Right cardiac atrium (tissue), 5 donors: ENCODE measurements at regions of chr6 and their contacts with region 1.

Region 1: GRCh38 chr6:83086751-83087150 is 19.3 kb downstream of the DOP1A start:
- DNase-seq: no peak
- ATAC-seq: peak in 1 of 2 donors; percentile 41
- H3K4me3 ChIP-seq: no peak overlapping the region
- H3K27ac ChIP-seq: no peak overlapping the region
- H3K4me1 ChIP-seq: peaks cover 1% of the 10 kb centered on the region
- H3K27me3 ChIP-seq: no peaks in the 10 kb centered on the region

Region 2: GRCh38 chr6:83006270-83006905 is 80.4 kb before region 1 on chr6:
- intact Hi-C with region 1: no loop called
- DNase-seq: no peak
- ATAC-seq: no peak
- H3K4me3 ChIP-seq: no peak overlapping the region
- H3K27ac ChIP-seq: no peak overlapping the region
- H3K4me1 ChIP-seq: no peaks in the 10 kb centered on the region
- H3K27me3 ChIP-seq: no peaks in the 10 kb centered on the region

Region 3: DNA sequence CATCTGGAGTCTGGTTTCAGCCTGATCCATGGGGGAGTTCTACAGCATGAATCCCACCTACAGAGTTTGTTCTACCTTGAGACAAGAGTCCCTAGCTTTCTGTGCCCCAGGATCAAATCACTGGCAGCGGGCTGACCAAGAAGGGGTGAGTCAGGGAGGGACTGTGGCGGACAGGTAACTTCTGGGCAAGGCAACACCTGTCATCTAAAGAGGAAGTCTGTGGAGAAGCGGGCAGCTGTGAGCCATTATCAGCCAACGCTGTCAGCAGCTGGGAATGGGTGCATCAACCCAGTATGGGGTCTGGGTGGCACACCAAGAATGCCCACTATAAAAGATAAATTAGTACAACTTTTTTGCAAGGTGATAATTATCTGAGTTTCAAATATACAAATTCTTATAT is 67.0 kb before region 1 on chr6:
- intact Hi-C with region 1: no loop called
- DNase-seq: no peak
- ATAC-seq: no peak
- H3K4me3 ChIP-seq: no peak overlapping the region
- H3K27ac ChIP-seq: no peak overlapping the region
- H3K4me1 ChIP-seq: no peaks in the 10 kb centered on the region
- H3K27me3 ChIP-seq: no peaks in the 10 kb centered on the region

Region 4: GRCh38 chr6:83199863-83200225 is 113.1 kb after region 1 on chr6:
- intact Hi-C with region 1: loop called in 1 of 4 experiments (anchors 10 kb)
- DNase-seq: no peak
- ATAC-seq: peak in 1 of 2 donors; percentile 26
- H3K4me3 ChIP-seq: no peak overlapping the region
- H3K27ac ChIP-seq: no peak overlapping the region
- H3K4me1 ChIP-seq: no peaks in the 10 kb centered on the region
- H3K27me3 ChIP-seq: no peaks in the 10 kb centered on the region

Region 5: GRCh38 chr6:83252717-83253116 is 166.0 kb after region 1 on chr6:
- intact Hi-C with region 1: no loop called
- DNase-seq: no peak
- ATAC-seq: no peak
- H3K4me3 ChIP-seq: no peak overlapping the region
- H3K27ac ChIP-seq: no peak overlapping the region
- H3K4me1 ChIP-seq: no peaks in the 10 kb centered on the region
- H3K27me3 ChIP-seq: no peaks in the 10 kb centered on the region

Region 6: DNA sequence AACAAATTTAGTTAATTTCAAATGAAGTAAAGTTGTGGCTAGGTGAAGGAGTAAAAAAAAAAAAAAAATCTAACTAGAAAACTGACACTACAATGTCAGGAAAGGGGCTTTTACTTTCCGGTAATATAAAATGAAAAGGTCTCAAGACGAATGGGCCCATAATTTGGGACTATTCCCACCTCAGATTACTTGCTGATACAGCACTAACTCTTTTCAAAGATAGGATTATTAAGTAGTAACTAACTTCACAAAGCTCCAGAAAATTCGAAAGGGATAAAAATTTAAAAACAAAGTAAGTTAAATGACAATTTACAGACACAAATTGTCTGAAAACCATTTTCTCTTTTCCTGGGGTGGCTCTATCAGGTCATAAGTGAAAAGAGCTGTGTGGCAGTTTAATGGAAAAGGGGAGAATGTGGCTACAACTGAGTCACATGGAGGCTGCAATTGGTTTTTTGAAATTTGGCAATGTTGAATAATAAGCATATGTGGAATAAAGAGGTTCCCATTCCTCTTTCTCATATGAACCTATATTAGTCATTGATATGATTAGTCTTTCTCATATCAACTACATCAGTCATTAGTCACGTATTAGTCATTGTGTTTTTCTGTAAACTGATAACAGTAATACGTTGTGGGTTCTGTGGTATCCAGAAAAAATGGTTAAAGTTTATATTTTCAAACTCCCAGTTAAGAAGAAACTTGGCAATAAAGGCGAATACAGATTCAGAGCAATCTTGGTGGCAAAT is 184.4 kb after region 1 on chr6:
- intact Hi-C with region 1: no loop called
- DNase-seq: no peak
- ATAC-seq: no peak
- H3K4me3 ChIP-seq: no peak overlapping the region
- H3K27ac ChIP-seq: no peak overlapping the region
- H3K4me1 ChIP-seq: no peaks in the 10 kb centered on the region
- H3K27me3 ChIP-seq: no peaks in the 10 kb centered on the region